ENCODE measurements at regions of chrX and their contacts with region 1.

Region 1: DNA sequence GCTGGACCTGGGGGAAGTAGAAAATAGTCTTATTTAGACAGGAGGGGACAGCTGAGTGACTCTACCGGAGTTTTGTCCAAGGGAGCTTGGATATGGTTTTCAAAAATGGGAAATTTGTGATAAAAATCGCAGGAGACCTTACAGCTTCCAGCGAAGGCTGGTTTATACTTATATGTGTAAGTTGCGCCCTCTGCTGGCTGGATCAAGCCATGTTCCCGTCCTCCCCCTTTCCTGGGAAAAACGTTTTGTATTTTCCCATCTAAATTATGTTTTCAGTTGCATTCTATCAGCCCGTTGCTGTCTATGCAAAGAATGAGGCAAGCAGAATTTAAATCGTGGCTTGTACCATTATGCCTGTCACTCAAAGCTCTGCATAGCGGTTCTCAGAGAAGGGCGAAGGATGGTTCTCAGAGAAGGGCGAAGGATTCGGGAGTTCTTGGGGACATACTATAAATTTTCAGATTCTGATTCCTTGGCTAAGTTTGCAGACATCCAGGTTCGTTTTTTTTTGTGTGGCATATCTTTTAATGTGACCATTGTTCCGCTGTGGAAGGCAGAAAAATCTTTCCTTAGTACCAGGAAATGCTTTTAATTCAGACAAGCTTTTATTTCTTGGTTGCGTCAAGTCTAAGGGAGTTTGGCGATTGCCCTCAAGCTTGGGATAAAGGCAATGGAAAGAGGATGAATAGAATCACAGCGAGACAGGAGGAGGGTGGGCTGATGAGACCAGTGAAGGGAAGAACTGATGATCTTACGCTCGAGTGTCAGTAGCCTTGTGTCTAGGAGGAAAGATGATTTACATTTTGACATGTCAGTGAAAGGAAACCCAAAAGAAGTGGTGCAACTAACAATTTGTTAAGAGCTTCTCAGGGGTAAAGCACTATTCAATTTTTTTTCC is 128.5 kb upstream of the ARX start:
- DNase-seq: peak; percentile 10
- CTCF ChIP-seq: peak; percentile 51

Region 2: DNA sequence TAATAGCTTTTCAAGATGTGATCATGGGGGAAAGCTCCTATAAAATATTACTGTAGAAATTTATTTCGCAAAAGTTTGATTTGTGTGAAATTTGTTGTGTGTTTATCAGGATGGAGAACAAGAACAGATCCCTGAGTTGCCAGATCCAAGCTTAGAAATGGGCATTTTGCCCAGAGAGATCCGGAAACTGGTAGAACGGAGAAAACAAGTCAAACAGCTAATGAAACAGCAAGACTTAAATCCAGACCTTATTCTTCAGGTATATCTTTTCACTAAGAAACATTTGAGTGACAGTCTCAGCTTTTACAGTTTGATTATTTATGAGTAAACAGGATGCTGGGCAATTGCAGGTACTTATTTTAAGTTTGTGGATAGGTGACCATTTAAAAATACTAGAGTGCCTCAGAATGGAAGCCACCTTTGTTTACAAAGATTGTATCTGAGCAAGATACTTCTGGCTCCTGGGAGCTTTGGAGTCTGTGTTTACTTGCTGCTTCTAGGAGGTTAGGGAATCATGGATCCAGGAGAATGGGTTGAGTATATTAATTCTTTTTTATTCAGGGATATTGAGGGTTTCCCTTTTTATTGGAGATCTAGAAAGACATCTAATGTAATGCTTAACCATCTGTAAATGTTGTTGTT is 396.0 kb before region 1 on chrX:
- CTCF ChIA-PET with region 1: interaction called, 12 read pairs
- POLR2A ChIA-PET with region 1: no interaction called
- DNase-seq: no peak
- CTCF ChIP-seq: no peak

Region 3: GRCh38 chrX:25131055-25131454 is 13.2 kb before region 1 on chrX:
- CTCF ChIA-PET with region 1: interaction called, 12 read pairs
- POLR2A ChIA-PET with region 1: no interaction called
- DNase-seq: no peak
- CTCF ChIP-seq: no peak

Region 4: GRCh38 chrX:25344161-25344936 is 200.1 kb after region 1 on chrX:
- CTCF ChIA-PET with region 1: no interaction called
- POLR2A ChIA-PET with region 1: no interaction called
- DNase-seq: no peak
- CTCF ChIP-seq: no peak

Measured in GM10248 (cell line).